ENCODE measurements at regions of chr12 and their contacts with region 1.

Region 1: DNA sequence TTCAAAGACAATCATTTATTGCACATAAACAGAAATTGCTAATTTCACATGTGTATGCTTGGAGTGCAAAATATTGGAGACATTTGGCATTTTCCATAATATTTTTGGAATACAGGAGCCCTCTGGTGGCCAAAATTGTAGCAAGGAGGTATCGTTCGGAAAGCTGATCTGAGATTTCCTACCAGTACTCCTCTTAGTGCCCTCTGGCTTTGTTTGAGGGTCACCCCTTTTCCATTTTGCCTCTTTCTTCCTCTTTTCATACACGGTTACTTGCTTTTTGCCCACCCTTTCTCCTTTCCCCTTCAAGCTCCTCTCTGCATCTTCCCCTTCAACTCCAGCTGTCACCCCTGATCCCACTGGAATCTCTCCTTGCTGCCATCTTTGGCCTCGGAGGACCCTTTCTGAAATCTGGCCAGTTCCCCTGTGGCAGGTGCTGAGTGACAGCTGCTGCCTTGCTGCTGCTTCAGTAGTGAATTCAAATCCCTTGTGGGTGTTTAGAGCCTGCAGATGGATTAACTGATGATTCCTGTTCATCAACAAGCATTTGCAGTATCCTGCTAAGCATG is 164.6 kb upstream of the PARP11 start:
- DNase-seq: peak; percentile 31
- ATAC-seq: no peak
- H3K4me3 Mint-ChIP-seq: no peak overlapping the region
- H3K27ac Mint-ChIP-seq: no peak overlapping the region
- H3K4me1 Mint-ChIP-seq: peaks cover 3% of the 10 kb centered on the region
- H3K27me3 Mint-ChIP-seq: no peaks in the 10 kb centered on the region
- CTCF ChIP-seq: peak; percentile 55

Region 2: DNA sequence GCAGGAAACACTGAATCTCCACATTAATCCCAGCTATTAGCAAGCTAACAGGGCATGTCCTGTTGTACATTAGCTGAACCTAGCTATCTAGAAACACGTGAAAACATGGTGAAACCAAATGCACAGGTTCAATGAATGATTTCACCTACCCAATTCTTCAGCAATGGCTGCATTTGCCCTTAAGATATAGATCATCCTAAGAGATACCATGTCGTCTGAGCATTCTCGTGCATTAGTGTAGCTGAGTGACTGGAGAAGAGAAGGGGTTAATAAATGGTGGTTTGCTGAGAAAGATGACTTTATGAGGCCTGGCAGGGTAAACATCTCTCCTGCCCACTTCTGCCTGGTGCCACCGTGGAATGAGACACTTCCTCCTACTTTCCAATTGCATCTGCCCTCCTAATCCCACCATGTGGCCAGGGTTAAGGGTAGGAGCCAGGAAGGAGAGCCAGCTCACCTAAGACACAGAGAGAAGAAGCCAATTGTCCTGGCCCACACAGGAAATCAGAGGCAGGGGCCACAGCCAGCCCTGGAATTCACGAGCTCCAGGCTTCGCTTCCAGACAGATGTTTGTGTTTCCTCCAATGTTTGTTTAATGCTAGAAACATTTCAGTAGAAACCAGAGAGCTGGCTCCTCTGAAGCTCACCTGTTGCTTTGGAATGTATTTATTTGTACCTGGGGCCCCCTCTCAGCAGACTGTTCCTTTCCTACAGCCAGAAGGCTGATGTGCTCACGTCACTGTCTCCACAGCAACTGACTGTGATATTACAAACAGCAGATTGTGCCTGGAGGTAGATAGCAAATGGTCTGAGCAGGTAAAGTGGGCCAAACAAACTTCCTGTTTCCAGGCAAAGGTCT is 38.6 kb before region 1 on chr12:
- CTCF ChIA-PET with region 1: interaction called, 16 read pairs
- POLR2A ChIA-PET with region 1: no interaction called
- intact Hi-C with region 1: no loop called
- DNase-seq: no peak
- ATAC-seq: no peak
- H3K4me3 Mint-ChIP-seq: no peak overlapping the region
- H3K27ac Mint-ChIP-seq: no peak overlapping the region
- H3K4me1 Mint-ChIP-seq: peaks cover 27% of the 10 kb centered on the region
- H3K27me3 Mint-ChIP-seq: no peaks in the 10 kb centered on the region
- CTCF ChIP-seq: no peak

Region 3: DNA sequence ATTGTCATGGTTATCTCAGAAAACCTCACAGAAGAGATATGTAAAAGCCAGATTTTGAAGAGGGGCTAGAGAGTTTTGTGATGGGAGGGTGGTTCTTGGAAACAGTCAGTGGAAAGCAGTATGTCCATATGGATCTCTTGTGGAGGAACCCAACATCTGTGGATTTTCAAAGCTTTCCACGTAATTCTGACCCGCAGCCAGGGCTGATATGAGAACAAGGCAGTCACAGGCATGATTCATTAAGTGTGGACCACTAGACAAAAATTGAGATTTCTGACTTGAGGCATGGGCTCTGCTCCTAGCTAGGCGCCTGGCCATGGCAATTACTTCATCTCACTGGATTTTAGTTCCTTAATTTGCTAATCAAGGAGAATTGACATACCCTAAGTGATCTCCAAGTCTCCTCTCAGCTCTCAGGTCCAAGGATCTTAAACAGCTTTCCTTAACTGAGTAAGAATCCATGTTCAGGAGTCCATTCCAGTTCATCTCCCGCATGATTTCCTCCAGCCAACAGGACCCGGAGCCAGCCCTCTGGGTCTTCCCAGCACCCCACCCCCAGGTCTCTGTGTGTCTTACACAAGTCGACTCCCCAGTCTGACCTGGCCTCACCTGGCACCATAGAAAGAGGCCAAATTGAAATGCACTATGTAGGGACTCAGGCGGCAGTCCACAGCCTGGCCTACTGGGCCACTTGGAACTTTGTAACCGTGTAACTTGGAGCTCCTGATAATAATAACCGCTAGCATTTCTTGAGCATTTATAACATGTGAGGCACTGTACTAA is 11.7 kb after region 1 on chr12:
- CTCF ChIA-PET with region 1: interaction called, 12 read pairs
- POLR2A ChIA-PET with region 1: interaction called, 3 read pairs
- intact Hi-C with region 1: no loop called
- DNase-seq: no peak
- ATAC-seq: no peak
- H3K4me3 Mint-ChIP-seq: no peak overlapping the region
- H3K27ac Mint-ChIP-seq: no peak overlapping the region
- H3K4me1 Mint-ChIP-seq: peaks cover 3% of the 10 kb centered on the region
- H3K27me3 Mint-ChIP-seq: no peaks in the 10 kb centered on the region
- CTCF ChIP-seq: no peak

Measured in activated CD8-positive, alpha-beta T cell treated with anti-CD3 and anti-CD28 coated beads for 36 hours (primary cell).